Left cardiac atrium (tissue), 4 donors: ENCODE measurements at regions of chr6 and their contacts with region 1.

Region 1: GRCh38 chr6:129730477-129731165 is 20.6 kb upstream of the ARHGAP18 start:
- DNase-seq: no peak
- ATAC-seq: peak in 1 of 2 donors; percentile 30

Region 2: DNA sequence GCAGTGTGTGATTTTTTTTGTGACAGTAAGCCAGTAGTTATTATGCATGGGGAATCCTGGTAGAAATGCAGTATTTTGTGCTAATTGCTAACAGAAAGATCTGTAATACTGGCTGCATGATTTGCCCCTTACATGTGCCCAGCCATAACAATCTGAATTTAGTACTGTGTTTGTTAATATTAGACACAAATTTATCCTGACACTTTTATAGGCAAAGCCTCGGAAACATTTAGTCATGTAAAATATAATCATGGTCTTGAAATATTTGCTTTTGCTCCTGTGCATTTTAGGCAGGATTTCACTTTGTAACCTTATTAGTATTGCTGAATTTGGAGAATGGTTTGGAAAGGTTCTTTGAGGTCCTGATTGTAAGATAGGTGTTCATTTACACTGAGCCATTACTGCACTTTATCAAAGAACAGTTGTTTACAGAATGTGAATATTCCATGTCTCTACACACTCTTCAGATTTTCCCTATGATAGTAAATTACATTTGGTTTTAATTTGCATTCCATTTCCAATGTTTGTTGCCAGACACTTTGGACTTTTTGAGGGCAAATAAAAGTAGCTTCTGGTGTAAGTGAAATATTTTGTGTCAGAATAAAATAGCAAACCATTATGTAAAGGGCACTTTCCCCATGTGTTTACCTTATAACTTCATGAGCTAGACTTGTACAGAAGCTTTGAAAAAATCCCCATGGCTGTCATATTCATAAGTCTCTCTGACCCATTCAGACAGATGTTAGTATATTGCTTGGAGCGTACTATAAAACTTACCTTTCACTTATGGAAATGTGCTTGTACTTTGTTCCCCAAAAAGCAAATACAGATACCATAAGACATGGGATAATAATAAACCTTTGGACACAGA is 370.6 kb before region 1 on chr6:
- intact Hi-C with region 1: no loop called
- DNase-seq: no peak
- ATAC-seq: no peak

Region 3: DNA sequence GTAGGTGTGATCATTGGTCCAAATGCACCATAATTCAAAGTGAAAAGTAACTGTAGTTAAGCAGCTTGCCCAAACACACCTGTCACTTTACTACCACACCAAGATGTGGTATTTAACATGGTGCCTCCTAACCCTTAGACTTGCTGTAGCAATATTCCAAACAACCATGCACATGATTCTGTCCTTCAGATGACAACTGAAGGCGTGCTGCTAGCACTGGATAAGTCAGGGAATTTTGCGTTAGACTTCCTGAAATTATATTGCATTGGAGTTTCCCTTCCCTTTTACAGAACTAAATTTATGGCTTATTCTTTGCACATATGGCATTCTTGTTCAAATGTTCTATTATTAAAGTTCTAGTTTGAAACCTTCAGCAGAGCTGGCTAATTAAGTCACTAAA is 126.9 kb before region 1 on chr6:
- intact Hi-C with region 1: loop called (anchors 2 to 5 kb)
- DNase-seq: no peak
- ATAC-seq: no peak